AG04450 (cell line): ENCODE measurements at regions of chr11 and their contacts with region 1.

Region 1: GRCh38 chr11:43282607-43283440 is 29.0 kb upstream of the API5 start:
- DNase-seq: no peak
- H3K4me3 ChIP-seq: no peak overlapping the region
- H3K27ac ChIP-seq: no peak overlapping the region
- H3K27me3 ChIP-seq: no peaks in the 10 kb centered on the region
- CTCF ChIP-seq: peak; percentile 89

Region 2: GRCh38 chr11:43234881-43235280 is 47.9 kb before region 1 on chr11:
- CTCF ChIA-PET with region 1: no interaction called
- POLR2A ChIA-PET with region 1: no interaction called
- DNase-seq: no peak
- H3K4me3 ChIP-seq: no peak overlapping the region
- H3K27ac ChIP-seq: no peak overlapping the region
- H3K27me3 ChIP-seq: no peaks in the 10 kb centered on the region
- CTCF ChIP-seq: no peak

Region 3: GRCh38 chr11:43270468-43270867 is 12.4 kb before region 1 on chr11:
- CTCF ChIA-PET with region 1: interaction called, 10 read pairs
- POLR2A ChIA-PET with region 1: no interaction called
- DNase-seq: no peak
- H3K4me3 ChIP-seq: no peak overlapping the region
- H3K27ac ChIP-seq: no peak overlapping the region
- H3K27me3 ChIP-seq: no peaks in the 10 kb centered on the region
- CTCF ChIP-seq: no peak

Region 4: DNA sequence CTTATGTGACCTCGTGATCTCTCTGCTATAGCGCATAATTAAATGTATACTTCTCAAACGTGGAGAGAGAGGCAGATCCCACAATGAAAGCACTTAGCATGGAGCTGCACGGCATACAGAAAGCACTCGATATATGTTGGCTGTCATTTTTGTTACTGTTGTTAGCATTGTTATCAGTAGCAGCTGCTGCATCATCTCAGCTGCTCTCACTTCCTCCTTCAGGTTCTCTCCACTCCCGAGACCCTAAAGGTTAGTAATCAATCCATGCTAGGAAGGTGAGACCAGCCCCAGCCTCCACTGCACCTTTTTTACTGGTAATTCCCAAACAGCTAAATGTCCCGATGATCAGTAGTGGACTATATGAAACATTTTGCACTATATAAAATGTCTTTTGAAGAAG is 15.6 kb after region 1 on chr11:
- CTCF ChIA-PET with region 1: interaction called, 13 read pairs
- POLR2A ChIA-PET with region 1: no interaction called
- DNase-seq: no peak
- H3K4me3 ChIP-seq: no peak overlapping the region
- H3K27ac ChIP-seq: no peak overlapping the region
- H3K27me3 ChIP-seq: no peaks in the 10 kb centered on the region
- CTCF ChIP-seq: no peak